ENCODE measurements at regions of chr3 and their contacts with region 1.

Region 1: GRCh38 chr3:136036306-136036705 is 70.8 kb downstream of the PPP2R3A start:
- DNase-seq: no peak
- ATAC-seq: no peak
- H3K4me3 ChIP-seq: no peak overlapping the region
- H3K27ac ChIP-seq: no peak overlapping the region
- H3K4me1 ChIP-seq: peaks cover 0 to 8% (median 0%) of the 10 kb centered on the region in 9 donors
- H3K27me3 ChIP-seq: no peaks in the 10 kb centered on the region
- CTCF ChIP-seq: no peak

Region 2: DNA sequence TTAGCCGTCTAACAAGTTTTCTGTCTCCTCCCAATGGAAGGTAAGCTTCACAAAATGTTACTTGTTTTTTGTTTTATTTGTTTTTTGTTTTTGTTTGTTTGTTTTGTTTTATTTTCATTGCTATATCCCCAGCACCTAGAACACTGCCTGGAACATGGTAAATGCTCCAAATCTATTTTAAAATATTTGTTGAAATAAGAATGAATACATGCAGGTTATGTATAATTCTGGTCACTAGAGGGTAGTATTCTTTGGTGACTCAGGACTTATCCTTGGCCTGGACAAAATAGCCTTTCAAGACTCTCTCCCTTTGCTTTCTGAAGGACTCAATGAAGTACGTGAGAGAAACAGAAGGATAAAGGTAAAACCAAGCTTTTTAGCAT is 117.7 kb before region 1 on chr3:
- intact Hi-C with region 1: loop called in 5 of 10 experiments (anchors 5 kb)
- DNase-seq: no peak
- ATAC-seq: peak in 5 of 8 donors; percentile 42 to 74 (median 66)
- H3K4me3 ChIP-seq: no peak overlapping the region
- H3K27ac ChIP-seq: no peak overlapping the region
- H3K4me1 ChIP-seq: peaks cover 0 to 10% (median 0%) of the 10 kb centered on the region in 9 donors
- H3K27me3 ChIP-seq: no peaks in the 10 kb centered on the region
- CTCF ChIP-seq: peak; percentile 20 to 66 (median 48)

Region 3: GRCh38 chr3:135965506-135966270 is 70.6 kb before region 1 on chr3 and contains the start of gene PPP2R3A:
- intact Hi-C with region 1: loop called in 1 of 10 experiments (anchors 5 kb)
- DNase-seq: peak; percentile 83 to 89
- ATAC-seq: peak; percentile 92 to 99 (median 96)
- H3K4me3 ChIP-seq: peak within 1 kb of the TSS; percentile 66 to 87 (median 76)
- H3K27ac ChIP-seq: peak within 1 kb of the TSS; percentile 42 to 94 (median 90)
- H3K4me1 ChIP-seq: peaks cover 0 to 35% (median 17%) of the 10 kb centered on the region in 9 donors
- H3K27me3 ChIP-seq: peaks cover 0 to 17% (median 0%) of the 10 kb centered on the region in 7 donors
- CTCF ChIP-seq: no peak
- total RNA-seq, gene PPP2R3A: 59.7 to 148 (median 115) TPM